Activated B cell treated with CpG ODN at 0.5 μM for 24 hours (primary cell): ENCODE measurements at regions of chr5 and their contacts with region 1.

Region 1: GRCh38 chr5:177311723-177312648 is at the start of gene MXD3:
- DNase-seq: peak; percentile 89
- ATAC-seq: peak; percentile 90
- H3K4me3 Mint-ChIP-seq: peak within 1 kb of the TSS; percentile 80
- H3K27ac Mint-ChIP-seq: peak within 1 kb of the TSS; percentile 47
- H3K4me1 Mint-ChIP-seq: peaks cover 38% of the 10 kb centered on the region
- H3K27me3 Mint-ChIP-seq: no peaks in the 10 kb centered on the region
- CTCF ChIP-seq: no peak
- total RNA-seq, gene MXD3: 7.6 and 9.1 TPM in 2 replicates

Region 2: GRCh38 chr5:177249761-177250526 is 62.0 kb before region 1 on chr5:
- CTCF ChIA-PET with region 1: no interaction called
- POLR2A ChIA-PET with region 1: no interaction called
- intact Hi-C with region 1: no loop called
- DNase-seq: no peak
- ATAC-seq: no peak
- H3K4me3 Mint-ChIP-seq: no peak overlapping the region
- H3K27ac Mint-ChIP-seq: no peak overlapping the region
- H3K4me1 Mint-ChIP-seq: no peaks in the 10 kb centered on the region
- H3K27me3 Mint-ChIP-seq: no peaks in the 10 kb centered on the region
- CTCF ChIP-seq: no peak

Region 3: DNA sequence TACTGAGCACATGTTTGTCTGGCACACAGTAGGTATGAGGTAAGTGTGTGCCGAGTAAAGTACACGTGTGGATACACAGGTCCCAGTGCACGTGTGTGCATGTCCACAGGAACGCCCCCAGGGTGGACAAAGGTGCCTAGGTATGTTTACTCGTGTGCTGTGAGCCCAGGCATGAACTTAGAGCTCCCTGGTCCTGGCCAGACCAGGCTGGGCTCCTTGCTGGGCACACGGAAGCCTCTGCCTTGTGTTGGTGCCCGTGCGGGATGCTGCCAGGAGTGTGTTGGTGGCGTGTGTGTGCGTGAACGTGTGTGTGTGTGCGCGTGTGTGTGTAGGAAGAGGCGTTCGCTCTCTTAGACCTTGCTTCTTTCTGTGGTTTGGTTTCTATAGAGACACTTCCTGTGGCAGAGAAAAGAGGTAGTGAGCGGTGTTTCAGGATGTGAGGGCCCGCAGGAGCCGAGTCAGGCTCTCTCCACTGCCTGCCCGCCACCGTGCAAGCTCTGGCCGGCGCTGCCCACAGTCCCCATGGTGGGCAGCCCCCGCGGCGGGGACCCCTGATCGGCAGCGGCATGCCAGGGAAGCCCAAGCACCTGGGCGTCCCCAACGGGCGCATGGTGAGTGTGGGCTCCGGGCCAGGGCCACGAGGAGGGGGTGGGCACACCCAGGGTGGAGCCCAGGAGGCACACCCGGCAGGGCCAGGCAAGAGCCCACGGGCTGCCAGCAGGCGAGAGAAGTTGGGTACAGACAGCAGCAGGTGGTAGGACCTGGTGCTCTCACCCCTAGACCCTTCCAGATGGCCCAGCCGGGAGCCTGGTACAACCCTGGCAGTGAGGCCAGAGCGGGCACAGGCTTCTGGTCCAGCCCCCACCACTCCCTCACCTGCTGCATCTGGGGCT is 45.7 kb after region 1 on chr5 and contains the start of gene RGS14:
- CTCF ChIA-PET with region 1: interaction called, 5 read pairs
- POLR2A ChIA-PET with region 1: interaction called, 12 read pairs
- intact Hi-C with region 1: loop called (anchors 2 kb)
- DNase-seq: peak; percentile 71
- ATAC-seq: peak; percentile 89
- H3K4me3 Mint-ChIP-seq: peak within 1 kb of the TSS; percentile 85
- H3K27ac Mint-ChIP-seq: peak within 1 kb of the TSS; percentile 92
- H3K4me1 Mint-ChIP-seq: peaks cover 72% of the 10 kb centered on the region
- H3K27me3 Mint-ChIP-seq: no peaks in the 10 kb centered on the region
- CTCF ChIP-seq: no peak
- total RNA-seq, gene RGS14: 50.6 and 58.3 TPM in 2 replicates

Region 4: DNA sequence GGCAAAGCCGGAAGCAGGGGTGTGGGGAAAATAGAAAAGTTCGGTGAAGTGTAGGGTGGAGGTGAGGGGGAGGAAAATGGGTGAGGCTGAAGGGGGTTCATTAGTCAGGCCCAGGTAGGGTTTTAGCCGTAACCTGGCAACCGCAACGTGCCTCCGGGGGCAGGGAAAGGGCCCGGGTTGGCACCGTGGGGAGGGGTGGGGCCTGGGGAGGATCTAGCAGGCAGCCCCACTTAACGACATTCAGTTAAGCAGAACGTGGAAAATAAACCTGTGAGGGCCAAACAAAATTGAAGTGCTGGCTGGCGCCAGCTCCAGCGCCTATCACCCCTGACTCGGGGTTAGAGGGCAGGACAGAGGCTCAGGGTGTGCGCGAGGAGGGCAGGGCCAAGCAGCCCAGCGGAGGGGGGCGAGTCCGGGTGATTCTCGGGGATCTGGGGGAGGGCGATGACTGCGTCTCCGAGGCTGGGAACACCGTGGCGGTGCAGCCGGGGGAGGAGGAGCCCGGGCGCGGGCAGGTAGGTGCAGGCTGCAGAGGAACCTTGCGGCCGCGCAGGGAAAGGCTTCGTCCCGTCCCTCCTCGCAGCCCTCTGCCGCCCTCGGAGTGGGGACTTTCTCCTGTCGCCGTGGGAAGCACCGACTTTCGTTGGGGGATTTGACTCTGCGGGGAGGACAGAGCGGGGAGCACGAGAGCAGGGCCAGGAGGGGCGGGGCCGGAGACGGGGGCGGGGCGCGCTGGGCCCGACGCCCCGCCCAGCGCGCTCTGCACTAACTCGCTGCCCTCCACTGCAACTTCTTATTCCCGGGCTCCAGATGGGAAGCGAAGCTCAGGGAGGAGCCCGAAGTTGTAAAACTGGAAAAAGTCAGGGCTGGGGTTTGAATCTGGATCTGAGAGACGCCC is 50.9 kb after region 1 on chr5:
- CTCF ChIA-PET with region 1: interaction called, 5 read pairs
- POLR2A ChIA-PET with region 1: interaction called, 12 read pairs
- intact Hi-C with region 1: no loop called
- DNase-seq: peak; percentile 60
- ATAC-seq: peak; percentile 73
- H3K4me3 Mint-ChIP-seq: peak overlapping the region; percentile 82
- H3K27ac Mint-ChIP-seq: peak overlapping the region; percentile 83
- H3K4me1 Mint-ChIP-seq: peaks cover 67% of the 10 kb centered on the region
- H3K27me3 Mint-ChIP-seq: no peaks in the 10 kb centered on the region
- CTCF ChIP-seq: no peak